HAP-1 (cell line): ENCODE measurements at regions of chr7 and their contacts with region 1.

Region 1: DNA sequence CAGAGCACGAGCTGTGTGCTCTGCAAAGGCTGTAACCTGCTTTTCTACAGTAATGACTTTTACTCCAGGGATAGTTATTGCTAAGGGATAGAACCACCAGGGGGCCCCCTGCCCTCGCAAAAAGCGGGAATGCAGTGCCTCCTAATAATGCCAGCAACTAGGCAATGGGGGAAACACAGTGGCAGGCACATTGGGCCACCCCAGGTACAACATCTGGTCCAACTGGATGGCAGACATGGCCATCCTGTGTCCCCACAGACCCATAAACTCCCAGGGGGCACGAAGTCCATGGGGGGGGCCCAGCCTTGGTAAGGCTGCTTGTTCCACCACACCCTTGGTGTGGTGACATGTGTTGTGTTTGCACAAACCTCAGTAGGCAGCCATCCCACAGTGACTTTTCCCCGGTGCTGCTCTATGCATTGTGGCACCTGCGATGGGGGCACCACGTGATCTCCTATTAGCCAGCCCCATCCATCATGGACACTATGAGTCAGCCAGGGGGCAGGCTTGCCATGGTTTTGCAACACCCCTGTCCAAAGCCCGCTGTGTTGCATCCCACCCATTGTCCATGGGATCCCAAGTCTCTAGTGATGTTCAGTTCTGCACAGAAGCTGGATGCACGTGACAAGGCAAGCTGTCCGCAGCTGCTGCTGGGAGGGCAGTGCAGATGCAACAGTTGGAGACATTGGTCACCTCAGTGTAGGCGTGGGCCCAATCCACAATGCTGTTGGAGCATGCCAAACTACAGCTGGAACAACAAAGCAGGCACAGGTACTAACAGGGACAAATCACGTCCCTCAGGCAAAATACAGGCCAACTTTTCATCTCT is 84.0 kb downstream of the ANLN start:
- DNase-seq: peak; percentile 49 to 81
- H3K4me3 ChIP-seq: no peak overlapping the region
- H3K4me1 ChIP-seq: no peaks in the 10 kb centered on the region
- H3K27me3 ChIP-seq: no peaks in the 10 kb centered on the region

Region 2: DNA sequence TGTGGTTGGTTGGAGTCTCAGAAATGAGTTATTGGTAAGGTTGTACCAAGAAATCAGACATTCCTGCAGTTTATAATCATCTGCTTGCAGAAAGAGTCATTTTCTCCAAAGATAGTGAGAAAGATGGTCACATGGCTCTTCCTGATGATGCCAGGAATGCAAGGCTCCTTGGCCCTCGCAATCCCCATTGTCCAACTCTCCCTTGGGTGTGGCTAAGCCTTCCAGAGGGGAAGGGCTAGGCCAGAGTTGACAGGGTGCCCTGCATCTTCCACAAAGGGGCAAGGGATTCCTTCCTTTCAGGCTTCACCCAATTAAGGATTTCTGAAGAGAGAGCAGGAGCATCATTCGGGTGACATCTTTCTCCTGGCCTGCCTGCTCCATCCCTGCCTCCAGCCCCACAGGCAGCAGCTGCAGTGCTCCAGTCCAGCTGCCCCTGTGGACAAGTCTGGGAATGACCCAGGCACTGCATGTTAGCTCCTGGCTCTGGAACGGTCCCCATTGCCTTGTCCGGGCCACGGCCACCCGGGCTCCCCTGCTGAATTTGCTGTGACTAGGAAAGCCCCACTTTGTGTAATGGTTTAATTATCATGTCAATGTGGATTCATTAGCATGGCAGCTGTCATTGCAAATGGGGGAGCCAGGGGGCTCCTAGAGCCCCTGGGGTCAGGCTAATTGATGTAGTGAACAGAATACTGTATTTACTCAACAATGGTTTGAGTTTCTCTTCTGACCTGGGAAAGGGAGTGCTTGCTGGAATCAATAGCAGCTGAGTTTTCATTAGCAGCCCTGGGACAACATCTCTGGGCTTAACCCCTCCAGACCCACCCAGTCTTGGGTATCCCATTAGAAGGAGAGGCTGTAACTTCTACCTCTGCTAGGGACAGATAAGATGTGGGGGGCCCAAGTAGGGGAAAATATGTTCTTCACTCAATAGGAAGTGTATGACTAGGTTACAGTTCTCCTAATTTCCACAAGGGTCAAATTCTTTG is 1107.2 kb before region 1 on chr7:
- in situ Hi-C with region 1: no loop called
- DNase-seq: no peak
- H3K4me3 ChIP-seq: no peak overlapping the region
- H3K4me1 ChIP-seq: no peaks in the 10 kb centered on the region
- H3K27me3 ChIP-seq: no peaks in the 10 kb centered on the region

Region 3: GRCh38 chr7:36670585-36671431 is 197.1 kb after region 1 on chr7:
- in situ Hi-C with region 1: loop called (anchors 10 kb)
- DNase-seq: peak; percentile 71 to 78
- H3K4me3 ChIP-seq: no peak overlapping the region
- H3K4me1 ChIP-seq: no peaks in the 10 kb centered on the region
- H3K27me3 ChIP-seq: no peaks in the 10 kb centered on the region